CD4-positive, alpha-beta memory T cell (primary cell): ENCODE measurements at regions of chrX and their contacts with region 1.

Region 1: DNA sequence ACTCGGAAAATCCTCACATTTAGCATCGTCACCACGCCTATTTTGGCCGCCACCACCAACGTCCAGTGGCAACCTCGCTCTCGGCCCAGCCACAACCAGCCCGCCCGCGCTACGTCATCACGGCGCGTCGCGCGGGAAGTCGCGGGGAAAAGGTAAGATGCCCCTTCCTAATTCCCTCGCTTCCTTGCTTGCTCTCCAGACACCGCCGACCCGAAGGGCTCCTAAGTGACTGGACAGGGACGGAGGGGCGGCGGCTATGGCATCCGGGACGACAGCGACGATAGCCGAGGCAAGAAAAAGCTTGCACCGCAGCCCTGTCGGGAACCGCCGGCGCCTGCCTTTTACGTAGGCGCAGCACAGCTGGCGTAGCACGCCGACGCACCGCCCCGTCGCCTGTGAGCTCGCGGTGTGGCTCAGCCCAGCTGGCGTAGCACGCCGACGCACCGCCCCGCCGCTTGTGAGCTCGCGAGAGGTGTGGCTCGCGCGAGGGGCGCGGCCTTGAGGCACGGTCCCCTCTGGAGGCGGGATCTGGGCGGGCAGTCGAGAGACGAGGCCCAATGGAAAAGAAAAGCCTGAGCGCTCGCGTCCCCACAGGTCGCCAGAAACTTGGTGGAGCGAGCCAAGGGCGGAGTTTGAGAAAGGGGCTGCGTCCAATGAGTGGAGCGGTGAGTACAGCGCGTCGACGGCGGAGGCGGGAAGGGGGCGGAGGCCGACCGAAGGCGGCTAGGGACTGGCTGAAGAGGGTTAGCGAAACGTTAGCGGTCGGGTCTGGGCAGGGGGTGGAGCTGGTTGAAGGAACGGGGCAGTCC is at the start of gene HDAC6:
- DNase-seq: peak; percentile 91 to 98 (median 97)
- H3K4me3 ChIP-seq: peak within 1 kb of the TSS; percentile 65 to 77
- H3K4me3 Mint-ChIP-seq: peak within 1 kb of the TSS; percentile 94 to 98 (median 96)
- H3K27ac ChIP-seq: peak within 1 kb of the TSS; percentile 87
- H3K27ac Mint-ChIP-seq: peak within 1 kb of the TSS; percentile 90 to 99 (median 99)
- H3K4me1 ChIP-seq: peaks cover 16% of the 10 kb centered on the region
- H3K4me1 Mint-ChIP-seq: peaks cover 3 to 25% (median 16%) of the 10 kb centered on the region in 4 donors
- H3K27me3 ChIP-seq: no peaks in the 10 kb centered on the region
- H3K27me3 Mint-ChIP-seq: no peaks in the 10 kb centered on the region
- total RNA-seq, gene HDAC6: 121 to 126 TPM

Region 2: GRCh38 chrX:48574270-48575266 is 226.9 kb before region 1 on chrX and contains the start of gene RBM3:
- CTCF ChIA-PET with region 1: no interaction called
- POLR2A ChIA-PET with region 1: interaction called, 6 read pairs
- intact Hi-C with region 1: loop called (anchors 1 kb)
- DNase-seq: peak; percentile 90 to 97 (median 95)
- H3K4me3 ChIP-seq: peak within 1 kb of the TSS; percentile 42 to 81
- H3K4me3 Mint-ChIP-seq: peak within 1 kb of the TSS; percentile 89 to 99 (median 97)
- H3K27ac ChIP-seq: peak within 1 kb of the TSS; percentile 96
- H3K27ac Mint-ChIP-seq: peak within 1 kb of the TSS; percentile 97 to 100 (median 98)
- H3K4me1 ChIP-seq: peaks cover 17% of the 10 kb centered on the region
- H3K4me1 Mint-ChIP-seq: peaks cover 7 to 31% (median 18%) of the 10 kb centered on the region in 4 donors
- H3K27me3 ChIP-seq: no peaks in the 10 kb centered on the region
- H3K27me3 Mint-ChIP-seq: no peaks in the 10 kb centered on the region
- total RNA-seq, gene RBM3: 169 to 173 TPM

Region 3: DNA sequence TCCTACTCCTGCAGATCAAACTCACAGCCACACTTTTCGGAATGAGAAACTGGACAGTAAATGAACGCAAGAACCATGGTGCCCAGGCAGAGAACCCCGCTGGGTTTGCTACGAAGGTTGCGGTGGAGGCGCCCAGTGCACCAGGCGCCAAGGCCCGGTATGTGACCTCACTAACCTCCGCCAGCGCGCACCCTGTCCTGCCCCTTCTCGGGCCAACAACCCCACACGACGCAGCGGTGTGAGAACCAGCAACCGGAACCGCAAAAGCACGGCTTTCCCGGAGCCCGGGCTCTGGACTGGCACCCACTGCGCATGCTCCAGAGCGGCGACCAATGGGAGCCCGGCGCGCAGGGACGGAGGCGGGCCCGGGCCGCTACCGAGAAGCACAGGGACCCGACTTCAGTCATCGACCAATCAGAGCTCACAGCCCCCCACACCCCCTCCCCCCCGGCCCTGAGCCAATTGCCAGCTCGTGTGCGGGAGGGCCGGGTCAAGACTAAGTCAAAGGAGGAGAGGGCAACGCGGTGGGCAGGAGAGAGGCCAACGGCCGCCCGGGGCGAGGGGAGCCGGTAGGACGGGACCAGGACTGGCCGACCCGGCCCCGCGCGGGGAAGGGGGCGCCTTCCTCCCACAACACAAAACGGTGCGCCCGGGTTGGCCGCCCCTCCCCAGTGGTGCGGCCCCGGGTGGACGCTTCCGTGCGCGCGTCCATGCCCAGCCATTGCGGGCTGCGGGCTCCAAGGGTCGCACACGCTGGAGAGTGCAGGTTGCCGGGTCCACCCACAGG is 125.2 kb before region 1 on chrX:
- CTCF ChIA-PET with region 1: no interaction called
- POLR2A ChIA-PET with region 1: interaction called, 8 read pairs
- intact Hi-C with region 1: loop called (anchors 1 kb)
- DNase-seq: peak; percentile 87 to 88 (median 88)
- H3K4me3 ChIP-seq: peak overlapping the region; percentile 36 to 69
- H3K4me3 Mint-ChIP-seq: peak overlapping the region; percentile 89 to 93 (median 92)
- H3K27ac ChIP-seq: peak overlapping the region; percentile 78
- H3K27ac Mint-ChIP-seq: peak overlapping the region; percentile 77 to 96 (median 94)
- H3K4me1 ChIP-seq: peaks cover 21% of the 10 kb centered on the region
- H3K4me1 Mint-ChIP-seq: peaks cover 8 to 25% (median 14%) of the 10 kb centered on the region in 4 donors
- H3K27me3 ChIP-seq: no peaks in the 10 kb centered on the region
- H3K27me3 Mint-ChIP-seq: no peaks in the 10 kb centered on the region

Region 4: GRCh38 chrX:48696301-48697181 is 104.9 kb before region 1 on chrX and contains the start of gene SUV39H1:
- CTCF ChIA-PET with region 1: no interaction called
- POLR2A ChIA-PET with region 1: interaction called, 17 read pairs
- intact Hi-C with region 1: loop called (anchors 1 kb)
- DNase-seq: peak; percentile 86 to 91 (median 89)
- H3K4me3 ChIP-seq: peak within 1 kb of the TSS; percentile 48 to 74
- H3K4me3 Mint-ChIP-seq: peak within 1 kb of the TSS; percentile 88 to 98 (median 90)
- H3K27ac ChIP-seq: peak within 1 kb of the TSS; percentile 78
- H3K27ac Mint-ChIP-seq: peak within 1 kb of the TSS; percentile 95 to 98 (median 97)
- H3K4me1 ChIP-seq: peaks cover 20% of the 10 kb centered on the region
- H3K4me1 Mint-ChIP-seq: peaks cover 9 to 28% (median 19%) of the 10 kb centered on the region in 4 donors
- H3K27me3 ChIP-seq: no peaks in the 10 kb centered on the region
- H3K27me3 Mint-ChIP-seq: no peaks in the 10 kb centered on the region
- total RNA-seq, gene SUV39H1: 8.7 to 10.2 TPM

Region 5: DNA sequence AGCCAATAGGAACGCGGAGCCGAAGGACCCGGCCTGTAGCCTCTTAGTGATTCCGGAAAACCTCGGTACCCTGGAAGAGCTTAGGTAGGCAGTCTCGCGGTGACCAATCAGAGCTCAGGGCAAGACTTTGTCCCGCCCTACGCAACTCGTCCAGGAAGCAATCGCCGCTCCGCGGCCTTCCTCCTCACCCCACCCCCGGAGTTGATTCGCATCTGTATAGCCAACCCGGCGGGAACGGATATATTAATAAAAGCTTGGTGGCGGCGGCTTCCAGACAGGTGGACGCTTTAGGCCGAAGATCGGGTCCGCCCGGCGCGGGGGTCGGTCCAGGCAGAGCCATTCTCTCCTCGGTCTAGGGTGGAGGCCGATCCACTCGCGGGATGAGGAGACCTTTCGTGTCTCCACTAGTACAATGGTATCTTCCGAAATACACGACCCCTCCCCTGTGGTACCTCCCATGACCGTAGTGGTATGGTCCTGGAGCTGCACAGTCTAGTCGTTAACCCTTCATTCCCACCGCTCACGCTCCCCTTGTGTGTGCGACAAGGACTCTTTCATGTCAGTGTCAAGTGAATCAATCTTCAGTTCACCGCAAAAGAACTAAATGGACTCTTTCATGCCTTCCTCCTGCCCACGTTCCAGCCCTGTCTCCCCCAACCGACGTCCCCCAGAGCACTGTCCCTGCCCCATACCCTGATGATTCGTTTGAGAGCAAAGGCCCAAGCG is 64.1 kb before region 1 on chrX:
- CTCF ChIA-PET with region 1: no interaction called
- POLR2A ChIA-PET with region 1: interaction called, 39 read pairs
- intact Hi-C with region 1: loop called (anchors 2 kb)
- DNase-seq: peak; percentile 85 to 93 (median 93)
- H3K4me3 ChIP-seq: peak overlapping the region; percentile 69 to 73
- H3K4me3 Mint-ChIP-seq: peak overlapping the region; percentile 81 to 94 (median 90)
- H3K27ac ChIP-seq: peak overlapping the region; percentile 68
- H3K27ac Mint-ChIP-seq: peak overlapping the region; percentile 89 to 98 (median 96)
- H3K4me1 ChIP-seq: peaks cover 20% of the 10 kb centered on the region
- H3K4me1 Mint-ChIP-seq: peaks cover 9 to 27% (median 17%) of the 10 kb centered on the region in 4 donors
- H3K27me3 ChIP-seq: no peaks in the 10 kb centered on the region
- H3K27me3 Mint-ChIP-seq: no peaks in the 10 kb centered on the region

Region 6: GRCh38 chrX:48786341-48786800 is 15.1 kb before region 1 on chrX and contains the start of gene GATA1:
- CTCF ChIA-PET with region 1: no interaction called
- POLR2A ChIA-PET with region 1: no interaction called
- intact Hi-C with region 1: no loop called
- DNase-seq: no peak
- H3K4me3 ChIP-seq: no peak within 1 kb of the TSS
- H3K4me3 Mint-ChIP-seq: no peak within 1 kb of the TSS
- H3K27ac ChIP-seq: no peak within 1 kb of the TSS
- H3K27ac Mint-ChIP-seq: peak within 1 kb of the TSS in 2 of 7 donors; percentile 61 to 65
- H3K4me1 ChIP-seq: no peaks in the 10 kb centered on the region
- H3K4me1 Mint-ChIP-seq: peaks cover 0 to 9% (median 5%) of the 10 kb centered on the region in 4 donors
- H3K27me3 ChIP-seq: no peaks in the 10 kb centered on the region
- H3K27me3 Mint-ChIP-seq: peaks cover 0 to 1% of the 10 kb centered on the region in 2 donors
- total RNA-seq, gene GATA1: not detected

Region 7: DNA sequence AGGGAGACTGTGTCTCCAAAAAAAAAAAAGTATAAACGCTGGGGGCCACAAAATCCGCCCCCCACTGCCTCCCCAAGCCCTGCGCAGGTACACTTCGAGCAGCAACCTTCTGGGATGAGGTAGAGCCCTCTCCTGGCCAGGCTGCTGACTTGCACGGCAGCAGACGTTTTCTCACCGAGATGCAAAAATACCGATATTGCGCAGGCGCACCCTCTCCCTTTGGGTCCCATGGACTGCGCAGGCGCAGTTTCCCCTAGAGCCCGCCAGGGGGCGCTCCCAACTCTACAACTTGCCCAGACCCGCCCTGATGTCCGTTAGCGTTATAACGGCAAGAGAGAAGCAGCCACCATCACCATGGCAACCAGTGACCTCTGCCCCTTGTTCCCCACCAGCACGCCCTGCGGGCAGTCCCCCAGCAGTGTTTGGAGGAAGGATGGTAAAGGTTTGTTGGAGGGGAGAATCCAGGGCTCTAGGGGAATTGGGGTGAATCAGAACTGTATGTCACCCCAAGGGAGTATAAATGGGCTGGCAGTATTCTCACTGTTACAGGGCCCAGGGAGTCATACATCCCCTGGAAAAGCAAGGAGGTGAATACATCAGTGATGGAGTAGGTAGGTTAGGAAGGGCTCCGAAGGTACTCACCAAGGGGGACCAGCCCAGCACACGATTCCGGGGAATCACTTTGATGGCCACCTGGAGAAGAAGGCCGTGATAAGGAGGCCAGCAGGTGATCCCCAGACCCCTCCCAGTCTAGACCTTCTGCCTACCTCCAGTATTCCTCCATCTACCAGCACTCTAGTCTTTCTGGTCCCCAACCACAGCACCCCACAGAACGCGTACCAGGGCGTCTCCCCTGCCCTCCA is 115.9 kb after region 1 on chrX:
- CTCF ChIA-PET with region 1: interaction called, 4 read pairs
- POLR2A ChIA-PET with region 1: interaction called, 8 read pairs
- intact Hi-C with region 1: loop called (anchors 1 kb)
- DNase-seq: peak; percentile 90 to 93 (median 92)
- H3K4me3 ChIP-seq: peak overlapping the region; percentile 91 to 98
- H3K4me3 Mint-ChIP-seq: peak overlapping the region; percentile 93 to 98 (median 96)
- H3K27ac ChIP-seq: peak overlapping the region; percentile 88
- H3K27ac Mint-ChIP-seq: peak overlapping the region; percentile 87 to 97 (median 95)
- H3K4me1 ChIP-seq: peaks cover 67% of the 10 kb centered on the region
- H3K4me1 Mint-ChIP-seq: peaks cover 27 to 85% (median 56%) of the 10 kb centered on the region in 4 donors
- H3K27me3 ChIP-seq: no peaks in the 10 kb centered on the region
- H3K27me3 Mint-ChIP-seq: no peaks in the 10 kb centered on the region

Region 8: GRCh38 chrX:49043220-49043986 is 241.9 kb after region 1 on chrX and contains the start of gene TFE3:
- CTCF ChIA-PET with region 1: no interaction called
- POLR2A ChIA-PET with region 1: no interaction called
- intact Hi-C with region 1: loop called (anchors 1 kb)
- DNase-seq: peak; percentile 91 to 99 (median 96)
- H3K4me3 ChIP-seq: peak within 1 kb of the TSS in 1 of 2 donors; percentile 63
- H3K4me3 Mint-ChIP-seq: peak within 1 kb of the TSS; percentile 84 to 94 (median 89)
- H3K27ac ChIP-seq: peak within 1 kb of the TSS; percentile 93
- H3K27ac Mint-ChIP-seq: peak within 1 kb of the TSS; percentile 93 to 97 (median 96)
- H3K4me1 ChIP-seq: peaks cover 39% of the 10 kb centered on the region
- H3K4me1 Mint-ChIP-seq: peaks cover 18 to 47% (median 30%) of the 10 kb centered on the region in 4 donors
- H3K27me3 ChIP-seq: no peaks in the 10 kb centered on the region
- H3K27me3 Mint-ChIP-seq: no peaks in the 10 kb centered on the region
- total RNA-seq, gene TFE3: 35.5 to 37.6 TPM